ENCODE measurements at regions of chr2 and their contacts with region 1.

Region 1: GRCh38 chr2:226984750-226985582 is 149.1 kb downstream of the RHBDD1 start:
- DNase-seq: peak; percentile 82
- H3K4me3 ChIP-seq: no peak overlapping the region
- CTCF ChIP-seq: peak; percentile 62

Region 2: DNA sequence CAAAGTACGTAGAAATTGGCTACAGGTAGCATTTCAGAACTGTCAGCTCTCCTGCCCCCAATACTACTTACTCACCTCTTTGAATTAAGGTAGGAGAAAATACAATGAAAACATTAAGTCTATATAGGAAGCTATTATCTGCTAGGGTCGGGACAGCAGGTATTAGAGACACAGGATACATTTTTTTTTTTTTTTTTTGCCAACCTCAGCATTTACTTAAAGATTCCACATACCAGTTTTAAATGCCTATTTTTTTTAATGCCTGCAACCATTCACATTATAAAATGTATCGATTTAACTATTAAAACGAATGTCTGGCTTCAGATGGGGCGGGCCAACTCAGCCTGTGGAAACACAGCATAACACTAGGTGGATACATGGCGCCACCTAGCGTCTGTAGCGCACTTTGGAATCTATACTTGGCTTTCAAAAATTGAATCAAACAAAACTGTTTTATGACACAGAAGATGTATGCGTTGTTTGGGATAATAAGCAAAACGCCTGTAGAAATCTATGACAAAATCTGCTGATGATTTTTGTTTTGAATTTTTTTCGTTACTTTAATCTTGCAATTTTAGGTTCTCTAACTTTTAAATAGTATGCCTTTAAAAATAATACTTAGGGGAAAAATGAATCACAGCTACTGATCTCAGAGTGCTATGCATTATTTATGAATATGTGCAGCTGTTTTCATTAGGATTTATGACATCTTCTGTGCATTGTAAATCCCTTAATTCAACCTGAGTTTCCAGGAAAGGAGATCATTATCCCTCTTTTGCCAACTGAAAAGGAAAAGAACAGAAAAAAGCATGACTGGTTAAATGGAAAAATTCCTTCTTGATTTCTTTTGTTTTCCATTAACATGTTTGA is 1324.5 kb before region 1 on chr2:
- in situ Hi-C with region 1: loop called (anchors 25 kb)
- DNase-seq: peak; percentile 52
- H3K4me3 ChIP-seq: no peak overlapping the region
- CTCF ChIP-seq: peak; percentile 88

Region 3: DNA sequence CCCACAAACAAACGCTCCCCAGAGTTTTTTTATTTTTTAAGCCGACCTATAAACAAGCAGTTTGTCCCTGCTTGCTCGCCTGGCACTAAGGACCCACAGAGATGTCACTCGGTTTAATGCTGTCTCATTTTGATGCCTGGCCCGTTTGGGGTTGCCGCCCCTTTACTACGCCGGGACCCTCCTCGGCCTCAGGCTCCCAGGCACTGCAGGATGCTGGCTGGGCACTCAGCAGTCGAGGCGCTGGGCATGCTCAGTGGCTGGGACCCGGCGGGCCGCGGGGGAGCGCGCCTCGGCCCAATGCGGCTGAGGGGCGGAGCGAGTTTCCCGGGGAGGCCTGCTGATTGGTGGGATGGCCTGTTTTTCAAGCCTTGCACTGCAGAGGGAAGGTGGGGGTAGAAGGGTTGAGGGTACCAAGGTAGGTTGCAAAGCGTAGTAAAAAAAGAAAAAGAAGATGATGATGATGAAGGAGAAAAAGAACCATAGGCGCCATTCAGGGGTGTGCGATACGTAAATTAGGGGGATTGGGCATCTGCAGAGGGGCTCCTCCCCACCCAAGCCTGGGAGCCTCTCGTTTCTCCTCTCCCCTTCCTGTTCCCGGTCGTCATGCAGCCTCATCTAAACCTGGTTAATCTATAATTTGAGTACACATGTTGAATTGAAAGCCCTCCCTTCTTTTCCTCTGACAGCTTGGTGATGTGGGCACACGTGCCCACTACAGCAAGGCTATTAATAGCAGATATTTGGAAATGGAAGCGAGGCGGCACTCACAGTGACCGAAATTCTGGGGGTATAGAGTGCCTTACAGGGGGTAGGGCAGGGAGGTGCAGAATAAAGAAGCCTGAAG is 183.8 kb before region 1 on chr2:
- in situ Hi-C with region 1: loop called (anchors 25 kb)
- DNase-seq: no peak
- H3K4me3 ChIP-seq: peak overlapping the region; percentile 88
- CTCF ChIP-seq: no peak